Dorsolateral prefrontal cortex (tissue), 120 donors: ENCODE measurements at regions of chr1 and their contacts with region 1.

Region 1: GRCh38 chr1:4652631-4653327 is 1.6 kb upstream of the AJAP1 start:
- DNase-seq: peak in 7 of 10 donors; percentile 49 to 85 (median 71)
- H3K4me3 ChIP-seq: peak overlapping the region in 15 of 59 donors; percentile 5 to 76 (median 26)
- H3K27ac ChIP-seq: peak overlapping the region in 47 of 59 donors; percentile 31 to 98 (median 69)
- H3K27me3 ChIP-seq: peaks cover 0 to 17% (median 0%) of the 10 kb centered on the region in 45 donors
- CTCF ChIP-seq: peak; percentile 74 to 99 (median 97)

Region 2: GRCh38 chr1:3900119-3900968 is 752.4 kb before region 1 on chr1 and contains the start of gene C1orf174:
- intact Hi-C with region 1: loop called in 1 of 2 experiments (anchors 10 kb)
- DNase-seq: peak; percentile 88 to 98 (median 96)
- H3K4me3 ChIP-seq: peak within 1 kb of the TSS; percentile 72 to 100 (median 96)
- H3K27ac ChIP-seq: peak within 1 kb of the TSS; percentile 93 to 100 (median 99)
- H3K27me3 ChIP-seq: no peaks in the 10 kb centered on the region
- CTCF ChIP-seq: peak in 9 of 56 donors; percentile 6 to 19 (median 13)
- total RNA-seq, gene C1orf174: 8.6 to 24.2 (median 15.2) TPM

Region 3: DNA sequence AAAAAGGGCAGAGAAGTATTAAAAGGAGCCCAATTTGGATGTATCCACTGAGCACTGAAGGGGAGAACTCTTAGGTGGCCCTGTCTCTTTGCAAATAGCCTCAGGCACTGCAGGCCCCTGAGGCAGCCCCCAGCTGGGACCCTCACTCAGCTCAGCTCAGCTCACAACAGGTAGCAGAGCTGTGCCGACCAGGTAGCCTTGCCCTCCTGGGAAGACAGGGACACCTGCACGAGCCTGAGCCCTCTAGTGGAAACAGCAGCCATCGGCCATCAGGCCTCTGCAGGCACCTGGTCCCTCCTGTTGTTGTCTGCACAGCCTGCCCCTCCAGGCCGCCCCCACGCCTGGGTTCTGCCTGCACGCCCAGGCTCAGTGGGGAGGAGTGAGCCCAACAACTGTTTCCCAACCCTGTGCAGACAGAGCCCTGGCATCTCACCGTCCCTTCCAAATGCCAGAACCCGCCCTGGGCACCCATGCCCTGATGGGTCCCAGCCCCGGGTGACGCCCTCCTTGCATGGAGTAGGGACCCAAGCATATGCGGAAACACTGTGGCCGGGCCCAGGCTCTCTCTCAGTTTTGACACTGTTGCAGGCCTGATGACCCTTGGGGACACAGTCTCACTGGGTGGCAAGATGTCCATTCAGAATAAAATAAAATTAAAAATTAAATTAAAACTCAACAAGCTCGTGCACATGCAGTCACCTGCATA is 58.3 kb before region 1 on chr1:
- intact Hi-C with region 1: no loop called
- DNase-seq: no peak
- H3K4me3 ChIP-seq: no peak overlapping the region
- H3K27ac ChIP-seq: no peak overlapping the region
- H3K27me3 ChIP-seq: peaks cover 0 to 10% (median 0%) of the 10 kb centered on the region in 45 donors
- CTCF ChIP-seq: no peak

Region 4: GRCh38 chr1:4700801-4701200 is 48.0 kb after region 1 on chr1:
- intact Hi-C with region 1: loop called (anchors 2 to 5 kb)
- DNase-seq: peak; percentile 49 to 96 (median 90)
- H3K4me3 ChIP-seq: peak overlapping the region in 5 of 59 donors; percentile 16 to 22 (median 18)
- H3K27ac ChIP-seq: peak overlapping the region in 58 of 59 donors; percentile 62 to 96 (median 86)
- H3K27me3 ChIP-seq: no peaks in the 10 kb centered on the region
- CTCF ChIP-seq: peak in 54 of 56 donors; percentile 14 to 73 (median 50)

Region 5: GRCh38 chr1:4778056-4778455 is 125.3 kb after region 1 on chr1:
- intact Hi-C with region 1: loop called (anchors 1 to 2 kb)
- DNase-seq: peak in 8 of 10 donors; percentile 19 to 69 (median 56)
- H3K4me3 ChIP-seq: peak overlapping the region in 2 of 59 donors; percentile 18 to 33
- H3K27ac ChIP-seq: peak overlapping the region in 13 of 59 donors; percentile 3 to 62 (median 22)
- H3K27me3 ChIP-seq: no peaks in the 10 kb centered on the region
- CTCF ChIP-seq: peak in 55 of 56 donors; percentile 34 to 82 (median 66)

Region 6: DNA sequence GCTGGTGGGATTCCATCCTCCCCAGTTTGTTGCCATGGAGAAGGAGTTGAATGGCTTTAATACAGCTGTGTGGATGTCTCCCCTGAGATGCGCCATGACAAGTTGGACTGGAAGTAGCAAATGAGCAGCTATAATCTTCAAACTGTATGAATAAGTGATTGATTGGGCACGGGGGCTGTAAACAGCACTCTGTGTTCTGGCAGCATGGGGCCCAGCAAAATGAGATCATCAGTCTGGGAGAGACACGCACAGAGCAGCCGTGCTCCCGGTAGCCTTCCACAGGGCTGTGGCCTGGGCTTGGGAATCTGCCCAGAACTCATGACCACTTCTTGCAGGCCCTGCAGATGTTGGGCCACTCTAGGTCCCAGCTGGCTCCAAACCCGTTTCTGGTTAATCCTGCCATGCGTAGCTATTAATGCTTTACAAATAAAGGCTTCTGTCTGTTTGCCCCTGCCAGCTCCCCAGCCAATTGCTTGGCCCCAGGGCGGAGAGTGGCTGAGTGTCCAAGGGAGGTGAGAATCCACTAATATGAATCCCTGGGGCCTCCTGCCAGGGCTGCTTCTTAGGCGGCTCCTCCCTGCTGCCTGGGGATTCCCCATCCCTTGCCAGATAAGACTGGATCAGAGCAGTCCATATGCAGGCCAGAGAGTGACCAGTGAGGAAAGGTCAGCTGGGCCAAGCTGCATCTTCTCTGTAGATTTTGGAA is 644.6 kb after region 1 on chr1:
- intact Hi-C with region 1: loop called (anchors 10 kb)
- DNase-seq: peak in 9 of 10 donors; percentile 73 to 93 (median 89)
- H3K4me3 ChIP-seq: no peak overlapping the region
- H3K27ac ChIP-seq: peak overlapping the region in 55 of 59 donors; percentile 18 to 92 (median 74)
- H3K27me3 ChIP-seq: peaks cover 0 to 27% (median 0%) of the 10 kb centered on the region in 45 donors
- CTCF ChIP-seq: peak in 4 of 56 donors; percentile 7 to 13 (median 10)

Region 7: GRCh38 chr1:5745776-5746610 is 1093.2 kb after region 1 on chr1:
- intact Hi-C with region 1: loop called in 1 of 2 experiments (anchors 10 kb)
- DNase-seq: peak; percentile 52 to 85 (median 72)
- H3K4me3 ChIP-seq: peak overlapping the region in 20 of 59 donors; percentile 11 to 55 (median 36)
- H3K27ac ChIP-seq: peak overlapping the region in 4 of 59 donors; percentile 22 to 58 (median 56)
- H3K27me3 ChIP-seq: peaks cover 0 to 10% (median 0%) of the 10 kb centered on the region in 45 donors
- CTCF ChIP-seq: peak; percentile 48 to 97 (median 90)